ENCODE measurements at regions of chr4 and their contacts with region 1.

Region 1: GRCh38 chr4:46844325-46844917 is 64.6 kb downstream of the COX7B2 start:
- DNase-seq: peak; percentile 50
- H3K4me3 ChIP-seq: no peak overlapping the region
- H3K27ac ChIP-seq: no peak overlapping the region
- H3K4me1 ChIP-seq: no peaks in the 10 kb centered on the region
- H3K27me3 ChIP-seq: no peaks in the 10 kb centered on the region
- CTCF ChIP-seq: peak; percentile 27

Region 2: GRCh38 chr4:46956451-46956850 is 112.0 kb after region 1 on chr4:
- intact Hi-C with region 1: no loop called
- DNase-seq: no peak
- H3K4me3 ChIP-seq: no peak overlapping the region
- H3K27ac ChIP-seq: no peak overlapping the region
- H3K4me1 ChIP-seq: no peaks in the 10 kb centered on the region
- H3K27me3 ChIP-seq: no peaks in the 10 kb centered on the region
- CTCF ChIP-seq: no peak

Region 3: GRCh38 chr4:47032415-47033106 is 188.1 kb after region 1 on chr4:
- intact Hi-C with region 1: loop called (anchors 5 kb)
- DNase-seq: peak; percentile 52
- H3K4me3 ChIP-seq: peak overlapping the region; percentile 46
- H3K27ac ChIP-seq: no peak overlapping the region
- H3K4me1 ChIP-seq: peaks cover 3% of the 10 kb centered on the region
- H3K27me3 ChIP-seq: no peaks in the 10 kb centered on the region
- CTCF ChIP-seq: peak; percentile 57

Region 4: DNA sequence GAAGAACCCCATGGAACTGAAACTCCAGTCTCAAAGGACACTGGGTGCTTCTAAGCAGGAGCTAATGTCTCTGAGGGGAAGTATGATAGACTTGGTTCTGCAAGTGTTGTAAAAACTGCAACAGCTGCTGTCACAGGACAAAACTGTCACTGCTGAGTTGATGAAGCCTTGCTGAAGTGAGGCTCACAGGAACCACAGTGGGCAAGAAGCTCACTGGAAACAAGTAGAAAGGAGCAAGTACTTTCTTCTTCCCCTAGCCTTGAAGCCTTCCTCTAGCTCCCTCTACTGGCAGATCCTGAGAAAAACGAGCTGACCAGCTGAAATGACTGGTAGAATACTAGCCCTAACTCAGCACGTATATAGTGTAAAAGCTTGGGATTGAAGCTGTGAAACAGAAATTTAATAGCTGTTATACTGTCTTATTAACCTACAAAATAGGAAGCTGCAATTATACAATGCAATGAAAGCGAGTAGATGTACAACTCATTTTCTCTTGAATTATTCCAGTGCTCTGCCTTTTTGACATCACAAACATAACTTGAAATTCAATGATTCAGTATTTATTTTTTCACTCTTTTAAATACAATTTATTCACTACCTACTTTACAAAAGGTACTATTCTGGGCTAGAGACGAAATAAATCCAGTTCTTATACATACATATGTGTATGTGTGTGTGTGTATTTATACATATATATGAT is 278.3 kb after region 1 on chr4:
- intact Hi-C with region 1: loop called (anchors 10 kb)
- DNase-seq: peak; percentile 68
- H3K4me3 ChIP-seq: no peak overlapping the region
- H3K27ac ChIP-seq: no peak overlapping the region
- H3K4me1 ChIP-seq: no peaks in the 10 kb centered on the region
- H3K27me3 ChIP-seq: no peaks in the 10 kb centered on the region
- CTCF ChIP-seq: peak; percentile 62

Region 5: DNA sequence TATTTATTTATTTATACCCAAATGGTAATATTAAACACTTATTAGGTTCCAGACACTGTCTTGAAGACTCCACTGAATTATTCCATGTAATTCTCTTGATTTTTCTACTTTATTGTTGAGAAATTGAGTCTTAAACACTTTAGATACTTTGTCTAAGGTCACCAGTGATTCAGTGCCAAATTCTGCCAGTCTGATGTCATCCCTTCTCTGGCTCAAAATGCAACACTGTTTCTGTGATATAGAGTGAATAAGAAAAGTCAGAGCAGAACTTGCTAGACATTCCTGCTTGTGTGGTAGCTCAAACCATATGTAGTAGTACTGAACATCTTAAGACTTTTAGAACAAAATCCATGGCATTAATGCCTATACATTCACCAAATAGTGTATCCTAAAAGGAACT is 351.3 kb after region 1 on chr4:
- intact Hi-C with region 1: no loop called
- DNase-seq: no peak
- H3K4me3 ChIP-seq: no peak overlapping the region
- H3K27ac ChIP-seq: no peak overlapping the region
- H3K4me1 ChIP-seq: no peaks in the 10 kb centered on the region
- H3K27me3 ChIP-seq: no peaks in the 10 kb centered on the region
- CTCF ChIP-seq: no peak

Region 6: DNA sequence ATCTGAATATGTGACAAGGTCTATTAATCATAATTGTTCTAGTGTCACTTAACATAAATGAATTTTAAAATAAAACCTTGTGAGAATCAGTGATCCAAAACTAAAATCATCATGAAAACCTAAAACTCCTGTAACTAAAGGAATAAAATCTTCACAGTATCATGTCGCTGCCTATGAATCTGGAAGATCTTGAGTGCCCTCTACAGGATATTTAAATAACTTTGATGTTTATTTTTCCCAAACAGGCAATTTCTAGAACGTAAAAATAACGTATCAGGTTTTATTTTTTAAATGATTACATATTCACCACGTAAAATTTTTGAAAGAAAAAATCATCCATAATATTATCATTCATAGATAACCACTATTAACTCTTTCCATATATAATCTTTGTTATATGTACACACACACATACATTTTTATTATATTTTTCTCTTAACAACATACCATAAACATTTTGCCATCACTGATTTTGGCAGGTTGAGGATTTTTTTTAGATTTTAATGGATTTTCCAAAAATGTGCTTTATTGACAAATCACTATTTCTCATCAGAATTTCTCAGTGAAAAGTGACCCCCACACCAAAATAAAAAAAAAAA is 539.5 kb after region 1 on chr4:
- intact Hi-C with region 1: loop called (anchors 5 kb)
- DNase-seq: no peak
- H3K4me3 ChIP-seq: no peak overlapping the region
- H3K27ac ChIP-seq: no peak overlapping the region
- H3K4me1 ChIP-seq: no peaks in the 10 kb centered on the region
- H3K27me3 ChIP-seq: no peaks in the 10 kb centered on the region
- CTCF ChIP-seq: peak; percentile 30